GM10248 (cell line): ENCODE measurements at regions of chr11 and their contacts with region 1.

Region 1: DNA sequence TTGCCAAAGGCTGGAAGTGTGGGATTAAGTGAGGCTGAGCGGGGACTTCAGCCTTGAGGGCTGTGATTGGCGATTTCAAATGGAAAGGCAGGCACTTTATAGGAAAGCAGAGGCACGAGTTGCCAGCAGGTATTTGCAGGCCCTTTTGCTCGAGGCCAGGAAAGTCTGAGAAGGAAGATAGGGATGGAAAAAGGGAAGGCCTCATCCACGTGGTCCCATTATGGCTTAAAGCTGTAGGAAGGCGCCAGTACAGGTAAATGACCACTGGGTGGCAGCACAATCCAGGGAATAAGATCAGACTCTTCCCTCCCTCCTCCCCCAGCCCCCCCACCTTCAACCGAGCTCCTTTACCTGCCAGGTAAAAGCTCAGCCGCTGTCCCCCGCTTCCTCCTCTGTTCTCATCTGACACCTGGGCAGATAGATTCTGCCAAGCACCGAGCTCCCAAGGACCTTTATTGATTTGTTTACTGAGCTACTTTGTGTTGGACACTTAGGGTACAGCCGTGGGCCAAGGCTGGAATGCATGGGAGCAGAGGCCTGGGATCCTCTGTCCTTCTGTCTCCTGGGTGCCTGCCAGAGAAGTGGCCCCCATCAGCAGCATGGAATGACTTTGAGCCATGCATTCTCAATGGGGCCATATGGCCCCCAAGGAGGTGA is 7.5 kb downstream of the P2RX3 start:
- DNase-seq: peak; percentile 80
- CTCF ChIP-seq: peak; percentile 80

Region 2: DNA sequence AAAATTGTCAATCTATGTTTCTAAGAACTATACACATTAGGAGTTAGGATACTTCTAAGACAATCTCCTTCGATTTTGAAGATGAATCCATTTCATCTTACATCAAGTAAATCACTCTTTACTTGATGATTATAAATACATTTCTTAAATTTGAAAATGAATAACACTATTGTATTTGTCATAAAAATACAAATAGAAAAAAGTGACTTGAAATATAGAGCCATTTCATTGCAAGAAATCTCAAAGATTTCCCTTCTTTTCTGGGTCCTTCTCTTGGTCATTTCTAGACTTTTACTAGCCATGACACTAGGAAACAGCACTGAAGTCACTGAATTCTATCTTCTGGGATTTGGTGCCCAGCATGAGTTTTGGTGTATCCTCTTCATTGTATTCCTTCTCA is 357.1 kb before region 1 on chr11 and contains the start of gene OR5AK2:
- CTCF ChIA-PET with region 1: no interaction called
- POLR2A ChIA-PET with region 1: no interaction called
- DNase-seq: no peak
- CTCF ChIP-seq: no peak

Region 3: DNA sequence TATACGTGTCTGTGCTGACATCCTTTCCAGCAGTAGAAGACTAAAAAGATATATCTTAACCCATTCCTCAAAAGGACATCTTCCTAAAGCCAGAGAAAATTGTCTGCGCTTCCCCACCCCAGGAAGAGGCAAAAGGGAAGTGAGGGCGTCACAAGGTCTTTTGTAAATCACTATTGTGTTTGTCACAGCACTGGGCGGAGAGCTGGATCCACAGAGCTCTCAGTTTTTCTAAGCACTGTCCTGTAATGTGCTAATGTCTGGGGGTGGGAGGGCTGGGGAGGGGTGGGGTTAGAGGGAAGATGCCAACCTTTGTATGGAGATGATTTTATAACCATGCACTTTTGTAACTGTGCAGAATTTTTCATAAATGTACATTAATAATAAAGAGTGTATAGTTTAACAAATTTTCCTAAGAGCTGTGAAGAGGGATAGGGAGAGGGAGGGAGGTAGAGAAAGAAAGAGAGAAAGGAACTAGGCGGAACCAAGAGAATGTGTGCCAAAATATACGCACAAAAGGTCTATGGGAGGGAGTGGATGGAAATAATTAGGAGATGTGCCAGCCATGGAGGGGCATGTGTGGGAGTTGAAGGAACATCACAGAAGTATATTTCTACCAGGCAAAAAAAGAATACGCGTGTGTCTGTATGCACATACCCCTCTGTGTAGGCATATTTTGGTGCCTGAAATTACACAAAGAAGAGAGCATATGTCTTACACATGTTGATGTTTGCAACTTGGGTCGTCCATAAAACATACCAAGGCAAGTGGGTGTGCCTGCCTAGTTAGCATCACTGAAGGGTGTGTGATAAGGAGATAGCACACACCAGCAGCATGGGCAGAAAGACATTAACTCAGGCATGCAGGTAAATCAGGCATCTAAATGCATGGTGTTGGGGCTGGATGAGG is 154.1 kb before region 1 on chr11:
- CTCF ChIA-PET with region 1: no interaction called
- POLR2A ChIA-PET with region 1: no interaction called
- DNase-seq: no peak
- CTCF ChIP-seq: no peak

Region 4: GRCh38 chr11:57324886-57325734 is 20.6 kb before region 1 on chr11 and contains the start of gene TNKS1BP1:
- CTCF ChIA-PET with region 1: interaction called, 15 read pairs
- POLR2A ChIA-PET with region 1: no interaction called
- DNase-seq: peak; percentile 93
- CTCF ChIP-seq: no peak

Region 5: DNA sequence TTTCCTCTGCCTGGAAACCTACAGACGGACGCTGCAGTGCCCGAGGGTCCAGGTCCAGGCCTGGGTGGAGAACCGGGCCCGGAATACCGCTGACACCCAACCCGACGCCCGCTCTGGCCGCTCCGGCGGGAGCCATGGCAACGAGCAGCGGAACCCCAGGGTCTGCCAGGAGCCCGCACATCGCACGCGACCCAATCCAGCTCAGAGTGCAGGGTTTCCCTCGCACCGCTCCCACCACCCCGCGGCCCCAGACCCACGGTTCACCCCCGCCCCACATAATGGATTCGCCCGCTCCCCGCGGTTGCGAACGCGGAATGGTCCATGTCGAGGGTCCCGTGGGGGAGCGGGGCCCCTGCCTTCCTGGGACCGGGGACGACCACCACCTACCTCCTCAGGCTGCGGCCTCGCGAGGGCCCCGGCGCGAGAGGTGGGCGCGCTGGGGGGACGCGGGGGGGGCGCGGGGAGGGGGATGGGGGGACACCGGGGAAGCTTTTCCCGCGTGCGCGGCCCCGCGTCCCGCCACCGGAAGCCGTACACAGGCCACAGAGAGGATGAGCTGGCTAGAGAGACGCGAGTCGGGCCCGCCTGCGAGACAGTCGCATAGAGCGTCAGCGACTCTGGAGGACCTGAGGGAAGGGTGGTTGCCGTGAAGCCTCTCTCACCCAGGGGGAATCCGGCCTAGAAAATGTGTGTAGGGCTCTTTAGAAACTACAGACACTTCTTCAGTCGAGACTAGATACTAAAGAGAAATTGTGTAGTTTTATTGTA is 10.2 kb before region 1 on chr11 and contains the start of gene SSRP1:
- CTCF ChIA-PET with region 1: interaction called, 28 read pairs
- POLR2A ChIA-PET with region 1: no interaction called
- DNase-seq: peak; percentile 92
- CTCF ChIP-seq: peak; percentile 22

Region 6: DNA sequence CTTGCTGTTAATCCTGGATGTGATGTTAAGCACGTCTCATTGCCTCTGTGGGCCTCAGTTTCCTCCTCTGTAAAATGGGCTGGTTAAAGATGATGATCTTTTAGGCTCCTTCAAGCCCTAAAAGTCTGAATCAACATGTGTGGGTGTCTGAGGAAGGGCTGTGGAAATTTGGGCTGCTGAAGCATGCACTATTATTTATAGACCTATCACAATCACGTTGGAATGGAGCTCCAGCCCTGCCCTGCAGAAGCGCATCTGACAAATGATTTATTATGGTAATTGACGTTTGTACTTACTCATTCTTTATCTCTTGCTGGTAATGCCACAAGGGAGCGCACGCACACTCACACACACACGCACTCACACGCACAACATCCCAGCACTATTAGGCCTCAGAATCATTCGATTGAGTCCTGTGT is 12.9 kb after region 1 on chr11:
- CTCF ChIA-PET with region 1: interaction called, 32 read pairs
- POLR2A ChIA-PET with region 1: no interaction called
- DNase-seq: no peak
- CTCF ChIP-seq: no peak

Region 7: GRCh38 chr11:57480409-57481137 is 134.9 kb after region 1 on chr11:
- CTCF ChIA-PET with region 1: interaction called, 37 read pairs
- POLR2A ChIA-PET with region 1: no interaction called
- DNase-seq: peak; percentile 80
- CTCF ChIP-seq: peak; percentile 88